Esophagus squamous epithelium (tissue), 5 donors: ENCODE measurements at regions of chr20 and their contacts with region 1.

Region 1: DNA sequence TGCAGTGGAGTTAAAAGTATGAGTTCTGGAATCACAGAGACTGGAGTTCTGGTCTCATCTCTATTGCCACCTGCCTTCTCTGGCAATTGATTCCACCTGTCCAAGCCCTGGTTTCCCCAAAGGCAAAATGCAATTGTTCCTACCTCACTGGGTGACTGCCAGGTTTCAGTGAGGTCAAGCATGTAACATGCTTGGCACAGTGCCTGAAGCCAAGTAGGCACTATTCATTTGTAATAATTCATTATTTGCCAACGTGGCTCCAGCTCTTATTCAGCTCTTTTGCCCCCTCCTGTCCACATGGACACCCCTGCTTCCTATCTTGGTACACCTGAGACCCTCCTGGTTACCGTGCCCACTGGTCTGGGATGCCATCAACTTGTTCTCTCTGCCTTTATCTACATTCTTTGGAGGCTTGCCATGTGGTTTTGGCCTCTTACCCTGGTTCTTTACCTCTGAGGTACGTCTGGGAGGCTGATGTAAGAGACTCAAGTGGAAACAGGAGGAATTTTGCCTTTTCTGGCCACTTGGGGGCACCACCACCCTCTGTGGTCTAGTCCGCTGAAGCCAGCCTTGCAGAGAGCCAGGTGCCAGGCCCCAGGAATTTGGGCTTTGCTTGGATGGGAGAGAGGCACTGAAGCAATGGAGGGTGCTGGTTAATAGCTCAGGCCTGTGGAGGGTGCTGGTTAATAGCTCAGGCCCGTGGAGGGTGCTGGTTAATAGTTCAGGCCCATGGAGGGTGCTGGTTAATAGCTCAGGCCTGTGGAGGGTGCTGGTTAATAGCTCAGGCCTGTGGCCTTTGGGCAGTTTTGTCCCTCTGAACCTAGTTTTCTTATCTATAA is 1.7 kb downstream of the KCNK15 start:
- DNase-seq: no peak
- H3K4me3 ChIP-seq: no peak overlapping the region
- H3K27ac ChIP-seq: no peak overlapping the region
- H3K4me1 ChIP-seq: peaks cover 14 to 40% (median 16%) of the 10 kb centered on the region in 3 donors
- H3K27me3 ChIP-seq: peaks cover 0 to 71% (median 0%) of the 10 kb centered on the region in 4 donors
- CTCF ChIP-seq: peak; percentile 45 to 69 (median 64)
- POLR2A ChIP-seq: no peak

Region 2: DNA sequence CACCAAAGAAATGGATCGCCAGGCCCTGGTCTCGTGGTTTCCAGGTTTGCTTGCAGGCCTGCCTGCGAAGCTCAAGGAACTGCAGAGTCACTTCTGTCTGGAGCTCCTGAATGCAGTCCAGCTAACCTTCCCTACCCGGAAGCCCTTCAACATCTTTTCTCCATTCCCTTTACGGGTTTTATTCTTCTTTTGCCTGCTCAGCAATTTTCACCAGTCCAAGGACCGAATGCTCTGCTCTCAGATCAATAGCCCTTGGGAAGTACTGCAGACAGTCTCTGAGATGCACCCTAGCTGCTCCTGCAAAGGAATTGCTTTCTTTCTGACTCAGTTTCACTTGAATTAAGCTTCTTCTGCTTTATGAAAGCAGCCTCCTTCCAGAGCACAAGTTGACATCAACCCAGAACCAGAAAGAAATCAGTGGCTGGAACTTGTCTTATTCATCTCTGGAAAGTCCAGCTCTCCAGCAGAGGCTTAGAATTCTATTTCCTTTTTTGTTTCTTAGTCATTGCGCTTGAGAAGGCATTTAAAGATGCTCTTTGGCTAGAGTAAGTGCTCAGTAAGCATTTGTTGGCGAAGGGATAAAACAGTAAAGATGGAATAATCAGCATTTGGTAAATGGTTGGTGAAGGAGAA is 119.4 kb after region 1 on chr20:
- intact Hi-C with region 1: loop called (anchors 5 kb)
- DNase-seq: no peak
- H3K4me3 ChIP-seq: peak overlapping the region in 1 of 4 donors; percentile 35
- H3K27ac ChIP-seq: no peak overlapping the region
- H3K4me1 ChIP-seq: peaks cover 4 to 26% (median 6%) of the 10 kb centered on the region in 3 donors
- H3K27me3 ChIP-seq: peaks cover 0 to 14% (median 0%) of the 10 kb centered on the region in 4 donors
- CTCF ChIP-seq: no peak
- POLR2A ChIP-seq: no peak

Region 3: GRCh38 chr20:45173531-45173930 is 426.1 kb after region 1 on chr20:
- intact Hi-C with region 1: no loop called
- DNase-seq: no peak
- H3K4me3 ChIP-seq: no peak overlapping the region
- H3K27ac ChIP-seq: peak overlapping the region in 3 of 4 donors; percentile 24 to 67 (median 29)
- H3K4me1 ChIP-seq: peaks cover 0 to 13% (median 0%) of the 10 kb centered on the region in 3 donors
- H3K27me3 ChIP-seq: peaks cover 0 to 11% (median 0%) of the 10 kb centered on the region in 4 donors
- CTCF ChIP-seq: no peak
- POLR2A ChIP-seq: no peak